ENCODE measurements at regions of chr9 and their contacts with region 1.

Region 1: DNA sequence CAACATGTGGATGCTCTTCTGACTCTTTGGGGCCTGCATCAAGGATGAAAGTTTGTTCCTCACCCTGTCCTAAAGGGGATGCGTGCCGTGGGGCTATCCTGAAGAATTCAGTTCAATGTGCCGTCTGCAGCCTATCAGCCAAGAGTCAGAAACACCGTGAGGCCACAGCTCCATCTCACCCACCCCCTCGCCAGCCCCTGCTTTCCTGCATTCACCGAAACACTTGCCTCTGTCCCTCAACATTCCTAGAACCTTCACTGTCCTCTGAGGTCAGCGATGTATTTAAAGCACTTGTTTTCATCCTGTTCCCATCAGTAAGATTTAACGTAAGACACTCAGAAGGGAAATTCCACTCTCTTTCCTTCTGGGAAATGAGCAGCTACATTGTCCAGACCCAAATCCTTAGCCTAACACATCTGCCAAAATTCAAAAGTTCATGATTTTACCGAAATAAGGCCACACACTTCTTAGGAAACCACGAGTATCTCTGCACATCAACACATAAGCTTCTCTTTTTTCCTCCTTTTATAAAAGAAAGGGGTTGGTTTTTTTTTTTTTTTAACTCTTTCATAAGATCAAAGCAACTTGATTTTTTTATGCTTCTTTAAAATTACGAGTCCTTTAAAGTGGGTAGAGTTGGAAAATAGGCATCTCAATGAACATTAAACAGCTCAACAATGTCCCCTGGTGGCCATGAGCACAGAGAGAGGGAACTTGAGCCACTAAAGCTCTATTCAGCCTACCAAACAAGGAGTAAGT is 100.7 kb downstream of the SUSD1 start:
- DNase-seq: peak in 3 of 4 experiments; percentile 37 to 79 (median 41)
- ATAC-seq: peak; percentile 76
- H3K4me3 ChIP-seq: no peak overlapping the region
- H3K27ac ChIP-seq: peak overlapping the region; percentile 81
- H3K4me1 ChIP-seq: peaks cover 31 to 45% of the 10 kb centered on the region in 2 experiments
- H3K27me3 ChIP-seq: no peaks in the 10 kb centered on the region
- CTCF ChIP-seq: peak; percentile 72 to 93 (median 88)
- EP300 ChIP-seq: no peak; the same call in 1 of the 2 replicates
- POLR2A ChIP-seq: no peak
- RAD21 ChIP-seq: peak; percentile 95

Region 2: DNA sequence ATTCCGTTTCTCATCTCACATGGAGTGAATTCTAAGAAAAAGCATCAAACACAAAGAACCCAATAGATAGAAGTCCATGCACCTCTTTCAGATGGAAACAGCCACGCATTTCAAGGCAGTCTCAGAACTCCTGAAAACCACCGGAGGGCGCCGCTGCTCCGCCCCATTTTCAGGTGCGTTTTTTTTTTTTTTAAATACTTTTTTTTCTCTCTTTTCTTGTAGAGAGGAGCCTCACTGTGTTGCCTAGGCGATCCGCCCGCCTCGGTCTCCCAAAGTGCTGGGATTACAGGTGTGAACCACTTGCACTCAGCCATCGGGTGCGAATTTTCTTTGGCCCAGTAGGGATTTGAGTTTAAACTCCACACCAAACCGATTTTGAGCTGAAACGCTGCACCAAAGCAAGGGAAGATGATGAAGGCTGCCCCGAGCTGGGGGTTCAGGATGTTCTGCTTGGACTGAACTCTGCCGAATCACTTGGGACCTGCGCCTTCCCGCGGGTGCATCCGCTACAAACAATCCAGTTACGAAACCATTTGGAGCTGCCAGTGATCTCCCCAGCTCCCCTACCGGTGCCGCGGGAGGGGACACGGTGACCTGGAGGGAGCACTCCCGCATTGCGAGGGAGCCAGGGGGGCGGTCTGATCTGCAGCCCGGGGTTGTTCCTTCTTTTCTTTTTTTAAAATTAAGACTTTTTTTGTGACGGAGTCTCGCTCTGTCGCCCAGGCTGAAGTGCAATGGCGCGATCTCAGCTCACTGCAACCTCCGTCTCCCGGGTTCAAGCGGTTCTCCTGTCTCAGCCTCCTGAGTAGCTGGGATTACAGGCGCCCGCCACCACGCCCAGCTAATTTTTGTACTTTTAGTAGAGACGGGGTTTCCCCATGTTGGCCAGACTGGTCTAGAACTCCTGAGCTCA is 476.4 kb before region 1 on chr9:
- CTCF ChIA-PET with region 1: interaction called, 23 read pairs
- POLR2A ChIA-PET with region 1: interaction called, 4 read pairs
- in situ Hi-C with region 1: no loop called
- intact Hi-C with region 1: loop called (anchors 5 kb)
- DNase-seq: peak; percentile 27 to 73 (median 44)
- ATAC-seq: peak; percentile 86
- H3K4me3 ChIP-seq: no peak overlapping the region
- H3K27ac ChIP-seq: no peak overlapping the region
- H3K4me1 ChIP-seq: peaks cover 2 to 14% of the 10 kb centered on the region in 2 experiments; a peak in 2 of 5 replicates
- H3K27me3 ChIP-seq: peaks cover 0 to 4% of the 10 kb centered on the region in 2 experiments; a peak in 2 of 5 replicates
- CTCF ChIP-seq: peak; percentile 77 to 84 (median 78)
- EP300 ChIP-seq: no peak
- POLR2A ChIP-seq: no peak
- RAD21 ChIP-seq: peak; percentile 49 to 70

Region 3: GRCh38 chr9:111828193-111828592 is 246.2 kb before region 1 on chr9:
- CTCF ChIA-PET with region 1: interaction called, 6 read pairs
- POLR2A ChIA-PET with region 1: no interaction called
- in situ Hi-C with region 1: no loop called
- intact Hi-C with region 1: loop called (anchors 1 kb)
- DNase-seq: peak in 1 of 4 experiments; percentile 10
- ATAC-seq: peak; percentile 48; the same call in 2 of the 3 replicates
- H3K4me3 ChIP-seq: no peak overlapping the region
- H3K27ac ChIP-seq: no peak overlapping the region
- H3K4me1 ChIP-seq: no peaks in the 10 kb centered on the region
- H3K27me3 ChIP-seq: peaks cover 0 to 7% of the 10 kb centered on the region in 2 experiments; a peak in 3 of 5 replicates
- CTCF ChIP-seq: peak; percentile 8 to 46 (median 26); a peak in 3 of 6 replicates
- EP300 ChIP-seq: no peak
- POLR2A ChIP-seq: no peak
- RAD21 ChIP-seq: peak; percentile 43 to 59

Region 4: GRCh38 chr9:111866976-111867375 is 207.5 kb before region 1 on chr9:
- CTCF ChIA-PET with region 1: no interaction called
- POLR2A ChIA-PET with region 1: no interaction called
- in situ Hi-C with region 1: no loop called
- intact Hi-C with region 1: no loop called
- DNase-seq: peak; percentile 20 to 44 (median 26)
- ATAC-seq: peak; percentile 86
- H3K4me3 ChIP-seq: no peak overlapping the region
- H3K27ac ChIP-seq: no peak overlapping the region
- H3K4me1 ChIP-seq: peaks cover 0 to 8% of the 10 kb centered on the region in 2 experiments; a peak in 4 of 5 replicates
- H3K27me3 ChIP-seq: no peaks in the 10 kb centered on the region; a peak in 1 of 5 replicates
- CTCF ChIP-seq: no peak
- EP300 ChIP-seq: peak; percentile 51; the same call in 1 of the 2 replicates
- POLR2A ChIP-seq: no peak
- RAD21 ChIP-seq: no peak

Region 5: DNA sequence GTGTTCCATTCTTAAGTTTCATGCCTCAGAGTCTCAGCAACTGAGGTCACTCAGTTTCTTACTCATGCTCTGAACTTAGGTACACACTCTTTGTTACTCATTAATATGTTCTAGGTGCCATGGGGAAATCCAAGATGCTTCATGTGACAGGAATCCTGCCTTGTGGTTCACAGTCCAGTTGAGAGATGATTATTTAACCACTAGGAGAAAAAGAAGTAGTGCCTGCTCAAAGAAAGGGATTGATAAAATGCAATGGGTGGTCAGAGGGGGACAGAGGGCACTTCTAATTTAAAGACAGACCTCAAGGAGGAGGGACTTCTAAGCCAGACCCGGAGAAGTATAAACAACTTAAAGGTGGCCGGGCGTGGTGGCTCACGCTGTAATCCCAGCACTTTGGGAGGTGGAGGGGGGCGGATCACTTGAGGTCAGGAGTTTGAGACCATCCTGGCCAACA is 108.8 kb before region 1 on chr9:
- CTCF ChIA-PET with region 1: no interaction called
- POLR2A ChIA-PET with region 1: interaction called, 6 read pairs
- in situ Hi-C with region 1: no loop called
- intact Hi-C with region 1: loop called (anchors 5 kb)
- DNase-seq: no peak
- ATAC-seq: no peak
- H3K4me3 ChIP-seq: no peak overlapping the region
- H3K27ac ChIP-seq: no peak overlapping the region
- H3K4me1 ChIP-seq: peaks cover 12 to 31% of the 10 kb centered on the region in 2 experiments; a peak in 3 of 5 replicates
- H3K27me3 ChIP-seq: no peaks in the 10 kb centered on the region
- CTCF ChIP-seq: no peak
- EP300 ChIP-seq: no peak
- POLR2A ChIP-seq: no peak
- RAD21 ChIP-seq: no peak

Region 6: DNA sequence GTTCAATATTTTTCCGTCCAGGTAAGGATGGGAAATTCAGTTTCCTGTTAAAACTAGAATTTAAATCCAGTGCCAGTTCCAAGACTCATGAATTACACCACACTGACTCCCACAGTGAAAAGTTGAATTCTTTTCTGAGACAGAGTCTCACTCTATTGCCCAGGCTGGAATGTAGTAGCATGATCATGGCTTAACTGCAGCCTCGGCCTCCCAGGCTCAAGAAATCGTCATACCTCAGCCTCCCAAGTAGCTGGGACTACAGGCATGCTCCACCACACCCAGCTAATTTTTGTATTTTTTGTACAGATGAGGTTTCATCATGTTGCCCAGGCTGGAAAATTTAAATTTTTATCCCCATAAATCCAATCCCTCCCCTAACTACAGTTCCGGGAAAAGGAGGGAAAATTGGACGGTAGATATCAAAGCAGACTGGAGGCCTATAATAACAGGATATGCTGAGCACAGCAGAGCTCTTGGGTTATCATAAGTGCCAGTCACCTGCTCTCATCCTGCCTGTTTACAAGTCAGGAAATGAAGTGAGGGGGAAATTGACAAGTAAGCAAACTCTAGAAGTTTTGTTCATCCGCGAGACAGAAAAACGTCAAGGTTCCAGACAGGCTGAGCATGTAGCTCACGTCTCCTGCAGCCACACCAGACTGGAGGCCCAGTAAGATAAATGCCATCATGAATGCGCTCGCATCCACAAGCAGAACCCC is 72.1 kb before region 1 on chr9:
- CTCF ChIA-PET with region 1: no interaction called
- POLR2A ChIA-PET with region 1: no interaction called
- in situ Hi-C with region 1: no loop called
- intact Hi-C with region 1: loop called (anchors 5 kb)
- DNase-seq: no peak
- ATAC-seq: no peak
- H3K4me3 ChIP-seq: no peak overlapping the region
- H3K27ac ChIP-seq: no peak overlapping the region
- H3K4me1 ChIP-seq: peaks cover 3% of the 10 kb centered on the region in 2 experiments; a peak in 2 of 5 replicates
- H3K27me3 ChIP-seq: no peaks in the 10 kb centered on the region
- CTCF ChIP-seq: no peak
- EP300 ChIP-seq: no peak
- POLR2A ChIP-seq: no peak
- RAD21 ChIP-seq: no peak